ENCODE measurements at regions of chr17 and their contacts with region 1.

Region 1: DNA sequence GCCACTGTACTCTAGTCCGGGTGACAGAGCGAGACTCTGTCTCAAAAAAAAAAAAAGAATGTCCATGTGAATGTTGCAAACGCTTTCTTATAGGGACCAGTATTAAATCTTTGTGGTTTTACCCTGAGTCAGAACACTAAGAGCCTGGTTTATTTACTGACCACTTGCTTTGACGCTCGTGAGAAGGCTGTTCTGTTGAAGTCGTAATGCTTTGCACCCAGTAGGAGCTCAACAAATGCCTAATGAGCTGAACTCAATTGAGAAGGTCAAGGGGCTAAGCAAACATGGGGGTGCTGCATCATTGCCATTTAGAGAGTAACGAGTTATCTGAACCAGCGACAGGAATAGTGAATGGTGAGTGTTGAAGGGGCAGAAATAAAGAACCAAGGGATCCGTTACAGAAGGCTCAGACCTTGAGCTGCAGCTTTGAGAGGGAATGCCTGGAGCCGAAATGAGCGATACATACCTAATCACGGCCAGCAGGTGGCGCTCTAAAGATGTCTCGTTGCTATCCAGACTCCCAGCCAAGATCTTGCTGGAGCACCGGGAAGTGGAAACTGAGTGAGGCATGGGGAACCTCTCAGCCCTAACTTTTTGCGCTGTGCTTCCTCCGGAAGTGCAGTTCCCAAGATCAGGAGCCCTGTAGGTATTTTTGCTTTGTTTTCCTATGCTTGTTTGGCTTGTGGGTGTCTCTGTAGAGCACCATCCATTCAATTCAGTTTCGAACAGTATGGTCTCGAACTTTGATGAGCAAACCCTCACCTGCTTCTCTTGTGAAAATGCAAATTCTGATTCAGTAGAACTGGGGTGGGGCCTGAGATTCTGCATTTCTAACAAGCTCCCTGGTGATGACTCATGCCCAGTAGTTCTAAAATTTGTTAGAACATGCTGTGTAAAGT is 12.6 kb upstream of the RNF222 start:
- DNase-seq: peak; percentile 85 to 93 (median 91)
- ATAC-seq: peak; percentile 95
- H3K4me3 ChIP-seq: no peak overlapping the region
- H3K27ac ChIP-seq: no peak overlapping the region
- H3K4me1 ChIP-seq: peaks cover 0 to 26% of the 10 kb centered on the region in 2 donors
- H3K27me3 ChIP-seq: no peaks in the 10 kb centered on the region
- CTCF ChIP-seq: peak; percentile 73 to 92

Region 2: GRCh38 chr17:8581002-8581658 is 170.9 kb after region 1 on chr17:
- intact Hi-C with region 1: no loop called
- DNase-seq: no peak
- ATAC-seq: no peak
- H3K4me3 ChIP-seq: no peak overlapping the region
- H3K27ac ChIP-seq: no peak overlapping the region
- H3K4me1 ChIP-seq: no peaks in the 10 kb centered on the region
- H3K27me3 ChIP-seq: no peaks in the 10 kb centered on the region
- CTCF ChIP-seq: no peak

Region 3: DNA sequence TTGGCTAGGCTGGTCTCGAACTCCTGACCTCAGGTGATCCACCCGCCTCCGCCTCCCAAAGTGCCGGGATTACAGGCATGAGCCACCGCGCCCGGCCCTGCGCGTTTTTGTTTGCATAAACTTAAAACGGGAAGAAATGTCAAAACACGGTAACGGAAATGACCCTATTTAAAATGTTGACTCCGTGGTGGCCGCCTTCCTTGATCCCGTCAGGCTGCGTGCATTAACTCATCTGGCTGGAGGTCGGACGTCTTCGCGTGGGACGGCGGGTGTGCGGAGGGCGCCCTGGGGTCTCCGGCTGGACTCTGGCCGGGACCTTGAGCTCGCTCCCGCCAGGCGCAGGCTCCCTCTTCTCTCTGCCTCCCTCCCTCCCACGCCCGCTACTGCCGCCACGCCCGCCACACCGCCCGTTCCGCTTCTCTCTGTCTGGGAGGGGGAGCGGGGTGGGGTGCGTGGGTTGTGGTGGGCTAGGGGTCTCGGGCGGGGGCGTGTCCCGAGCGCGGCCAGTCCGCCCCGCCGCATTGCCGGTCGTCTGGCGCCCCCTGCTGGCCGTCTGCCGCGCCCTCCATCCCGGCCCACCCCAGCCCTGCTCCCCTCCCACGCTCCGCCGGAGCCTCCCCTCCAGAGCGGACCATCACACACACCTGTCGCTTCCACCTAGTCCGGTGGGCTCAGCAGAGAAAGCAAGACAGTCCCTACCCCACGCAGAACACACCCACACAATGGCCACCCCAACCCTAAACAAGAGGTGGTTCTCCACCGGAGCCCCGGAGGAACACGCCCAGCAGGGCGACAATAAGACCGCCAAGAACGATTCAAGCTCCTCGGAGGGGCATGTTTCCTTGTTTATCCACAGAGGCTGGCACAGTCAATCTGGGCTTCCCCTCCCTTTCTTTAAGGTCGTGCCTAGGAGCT is 335.6 kb after region 1 on chr17:
- intact Hi-C with region 1: loop called in 1 of 2 experiments (anchors 10 kb)
- DNase-seq: peak; percentile 73 to 94 (median 80)
- ATAC-seq: peak; percentile 88
- H3K4me3 ChIP-seq: peak overlapping the region; percentile 50 to 66
- H3K27ac ChIP-seq: peak overlapping the region; percentile 17 to 78
- H3K4me1 ChIP-seq: peaks cover 3 to 18% of the 10 kb centered on the region in 2 donors
- H3K27me3 ChIP-seq: peaks cover 0 to 11% of the 10 kb centered on the region in 2 donors
- CTCF ChIP-seq: peak; percentile 95 to 96

Region 4: DNA sequence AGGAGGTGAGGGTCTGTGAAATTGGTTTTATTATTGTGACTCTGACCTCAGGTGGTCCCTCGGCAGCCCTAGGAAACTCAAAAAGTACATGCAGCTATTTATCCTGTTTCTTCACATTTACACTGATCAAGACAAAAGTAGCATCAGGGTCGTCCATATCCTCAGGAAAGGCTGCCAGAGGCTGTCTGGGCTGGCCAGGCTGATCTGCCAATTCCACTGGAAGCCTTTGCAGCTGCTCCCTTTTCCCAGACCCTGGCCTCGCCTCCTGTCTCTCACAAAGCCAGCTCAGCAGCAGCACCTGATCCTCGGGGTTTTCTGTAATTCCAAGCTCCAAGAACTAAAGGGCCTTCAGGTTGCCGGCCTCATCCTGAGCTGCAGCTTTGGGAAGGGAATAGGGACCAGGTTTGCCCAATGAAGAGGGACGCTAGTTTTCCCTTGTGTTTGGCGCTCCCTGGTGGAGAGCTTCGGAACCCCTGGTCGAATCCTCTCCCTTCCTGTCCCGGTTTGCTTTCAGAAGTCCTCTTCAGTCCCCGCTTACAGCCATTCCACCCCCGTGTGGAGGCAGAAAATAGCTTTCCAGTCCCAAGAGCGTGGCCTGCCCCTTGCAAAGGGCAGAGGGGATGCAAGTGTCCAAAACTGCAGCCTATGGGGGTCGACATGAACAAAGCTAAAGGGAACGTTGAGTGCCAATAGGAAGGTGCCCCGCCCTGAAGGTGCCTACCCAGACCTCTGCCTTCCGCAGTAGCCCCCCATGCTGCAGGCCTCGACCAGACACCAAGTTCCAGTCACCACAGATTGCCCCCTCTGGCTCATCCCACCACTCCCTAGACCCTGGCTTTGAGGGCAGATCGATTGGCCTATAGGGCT is 375.6 kb after region 1 on chr17:
- intact Hi-C with region 1: loop called in 1 of 2 experiments (anchors 10 kb)
- DNase-seq: peak; percentile 68 to 87 (median 79)
- ATAC-seq: peak; percentile 84
- H3K4me3 ChIP-seq: no peak overlapping the region
- H3K27ac ChIP-seq: no peak overlapping the region
- H3K4me1 ChIP-seq: peaks cover 0 to 15% of the 10 kb centered on the region in 2 donors
- H3K27me3 ChIP-seq: peaks cover 3 to 16% of the 10 kb centered on the region in 2 donors
- CTCF ChIP-seq: peak; percentile 71 to 91

Measured in left lung (tissue), 14 donors.